Posterior vena cava (tissue), 2 donors: ENCODE measurements at regions of chr1 and their contacts with region 1.

Region 1: DNA sequence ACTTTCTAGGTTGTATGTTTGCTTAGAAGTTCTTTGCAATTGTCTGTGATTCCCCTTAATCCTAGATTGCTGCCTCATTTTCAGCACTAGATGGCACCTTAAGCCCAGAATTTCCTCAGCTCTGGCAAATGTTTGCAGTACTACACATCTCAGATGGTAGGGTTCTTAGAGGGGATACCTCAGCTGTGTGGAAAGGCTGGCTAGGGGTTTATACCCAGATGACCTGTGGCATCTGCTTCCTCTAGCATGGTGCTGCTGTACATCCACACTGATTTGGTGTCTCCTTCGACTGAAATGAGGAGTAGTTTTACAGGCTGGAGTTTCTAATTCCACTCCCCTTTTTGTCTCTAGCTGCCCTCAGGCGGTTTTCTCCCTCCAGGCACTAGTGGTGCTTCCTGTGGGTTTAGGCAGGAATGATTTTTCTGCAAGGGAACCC is 23.5 kb downstream of the ASB17 start:
- DNase-seq: no peak

Region 2: GRCh38 chr1:75838079-75838478 is 70.7 kb before region 1 on chr1:
- intact Hi-C with region 1: no loop called
- DNase-seq: no peak

Region 3: DNA sequence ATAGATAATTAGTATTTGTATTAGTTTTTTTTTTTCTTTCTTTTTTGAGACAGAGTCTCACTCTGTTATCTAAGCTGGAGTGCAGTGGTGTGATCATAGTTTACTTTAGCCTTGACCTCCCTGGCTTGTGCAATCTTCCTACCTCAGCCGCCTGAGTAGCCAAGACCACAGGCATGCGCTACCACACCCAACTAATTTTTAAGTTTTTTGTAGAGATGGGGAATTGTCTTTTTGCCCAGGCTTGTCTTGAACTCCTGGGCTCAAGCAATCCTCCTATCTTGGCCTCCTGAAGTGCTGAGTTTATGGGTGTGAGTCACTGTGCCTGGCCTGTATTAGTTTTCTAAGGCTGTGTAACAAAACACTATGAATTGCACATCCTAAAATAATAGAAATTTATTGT is 53.7 kb before region 1 on chr1:
- intact Hi-C with region 1: no loop called
- DNase-seq: no peak

Region 4: GRCh38 chr1:75870951-75871350 is 37.8 kb before region 1 on chr1:
- intact Hi-C with region 1: loop called in 1 of 2 experiments (anchors 2 kb)
- DNase-seq: no peak